ENCODE measurements at regions of chr15 and their contacts with region 1.

Region 1: GRCh38 chr15:63122002-63122893 is 587 bp downstream of the LACTB start:
- DNase-seq: peak; percentile 88 to 95
- H3K4me3 ChIP-seq: peak overlapping the region; percentile 73 to 77
- H3K27ac ChIP-seq: peak overlapping the region; percentile 76 to 89
- H3K4me1 ChIP-seq: peaks cover 0 to 4% of the 10 kb centered on the region in 2 donors
- H3K27me3 ChIP-seq: no peaks in the 10 kb centered on the region
- CTCF ChIP-seq: peak in 2 of 3 experiments; percentile 6 to 31

Region 2: DNA sequence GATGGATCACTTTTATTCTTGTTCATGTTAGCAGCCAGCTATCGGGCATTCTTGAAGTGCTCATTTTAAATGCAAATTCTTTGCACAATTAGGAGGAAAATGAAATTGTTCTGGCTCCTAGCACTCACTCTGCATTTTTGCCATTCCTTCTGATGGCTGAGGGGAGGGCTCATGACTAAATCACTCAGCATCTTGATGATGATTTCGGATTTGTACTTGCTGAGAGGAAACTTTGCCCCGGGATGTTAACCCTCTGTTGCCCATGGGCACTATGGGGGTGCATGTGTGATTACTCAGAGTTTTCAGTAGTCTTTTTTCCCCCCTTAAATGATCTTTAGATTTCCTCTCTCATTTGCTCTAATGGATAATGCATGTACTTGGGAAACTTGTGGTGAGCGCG is 657.5 kb before region 1 on chr15:
- intact Hi-C with region 1: no loop called
- DNase-seq: no peak
- H3K4me3 ChIP-seq: no peak overlapping the region
- H3K27ac ChIP-seq: peak overlapping the region; percentile 25 to 56
- H3K4me1 ChIP-seq: peaks cover 7 to 47% of the 10 kb centered on the region in 2 donors
- H3K27me3 ChIP-seq: no peaks in the 10 kb centered on the region
- CTCF ChIP-seq: no peak

Region 3: GRCh38 chr15:63198371-63199250 is 76.4 kb after region 1 on chr15:
- intact Hi-C with region 1: no loop called
- DNase-seq: no peak
- H3K4me3 ChIP-seq: no peak overlapping the region
- H3K27ac ChIP-seq: no peak overlapping the region
- H3K4me1 ChIP-seq: peaks cover 7 to 36% of the 10 kb centered on the region in 2 donors
- H3K27me3 ChIP-seq: no peaks in the 10 kb centered on the region
- CTCF ChIP-seq: no peak

Region 4: DNA sequence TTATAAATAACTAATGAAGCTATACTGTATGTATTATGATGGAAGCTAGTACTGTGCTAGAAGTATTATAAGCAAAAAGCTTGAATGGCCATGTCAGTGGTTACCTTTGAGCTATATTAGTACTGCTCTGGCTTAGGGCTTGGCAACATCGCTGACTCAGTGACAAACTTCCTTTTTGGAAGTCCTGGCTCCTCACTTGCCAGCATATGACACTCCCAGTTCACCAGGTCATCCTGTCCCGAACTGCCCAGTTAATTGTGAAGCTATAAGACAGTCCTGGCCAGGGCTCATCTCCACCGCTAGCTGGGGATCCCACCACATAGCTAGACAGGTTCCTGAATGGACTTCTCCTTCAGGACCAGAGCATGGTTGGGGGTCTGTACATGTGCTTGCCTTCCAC is 99.1 kb after region 1 on chr15:
- intact Hi-C with region 1: no loop called
- DNase-seq: no peak
- H3K4me3 ChIP-seq: no peak overlapping the region
- H3K27ac ChIP-seq: peak overlapping the region in 1 of 2 donors; percentile 7
- H3K4me1 ChIP-seq: peaks cover 12 to 15% of the 10 kb centered on the region in 2 donors
- H3K27me3 ChIP-seq: no peaks in the 10 kb centered on the region
- CTCF ChIP-seq: no peak

Region 5: DNA sequence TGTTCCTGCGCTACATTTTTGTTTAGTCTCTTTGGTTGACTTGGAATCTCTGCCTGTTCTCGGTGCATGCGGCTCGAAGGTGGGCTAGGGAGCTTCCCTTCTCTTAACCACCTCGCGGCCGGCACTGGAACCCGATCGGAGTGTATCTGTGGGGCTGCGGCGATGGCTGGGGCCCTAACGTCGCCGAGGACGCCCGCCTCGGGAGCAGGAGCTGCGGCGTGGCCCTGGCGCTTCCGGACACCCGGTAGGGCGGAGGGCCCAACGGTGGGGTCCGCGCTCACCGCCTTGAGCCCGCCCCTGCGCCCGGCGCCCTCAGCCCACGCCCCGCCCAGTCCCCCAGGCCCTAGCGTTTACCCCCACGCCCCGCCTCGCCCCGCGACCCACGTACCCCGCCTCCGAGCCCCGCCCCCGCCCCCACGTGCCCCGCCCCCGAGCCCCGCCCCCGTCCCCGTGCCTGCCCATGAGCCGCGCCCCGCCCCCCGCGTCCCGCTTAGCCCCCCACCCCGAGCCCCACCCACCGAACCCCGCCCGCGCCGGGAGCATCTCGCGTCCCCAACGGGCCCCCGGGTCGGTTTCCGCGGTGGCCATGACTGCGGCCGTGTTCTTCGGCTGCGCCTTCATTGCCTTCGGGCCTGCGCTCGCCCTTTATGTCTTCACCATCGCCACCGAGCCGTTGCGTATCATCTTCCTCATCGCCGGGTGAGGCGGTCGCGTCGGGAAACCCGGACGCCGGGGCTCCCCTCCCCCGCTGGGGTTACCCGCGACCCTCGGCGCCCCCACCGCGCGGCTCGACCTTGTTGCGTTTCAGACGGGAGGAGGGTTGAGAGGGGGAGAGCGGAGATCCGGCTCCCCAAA is 155.0 kb after region 1 on chr15 and contains the start of gene APH1B:
- intact Hi-C with region 1: loop called (anchors 5 kb)
- DNase-seq: peak in 1 of 2 donors; percentile 85
- H3K4me3 ChIP-seq: peak within 1 kb of the TSS; percentile 76 to 81
- H3K27ac ChIP-seq: peak within 1 kb of the TSS; percentile 84 to 87
- H3K4me1 ChIP-seq: peaks cover 0 to 4% of the 10 kb centered on the region in 2 donors
- H3K27me3 ChIP-seq: no peaks in the 10 kb centered on the region
- CTCF ChIP-seq: no peak
- total RNA-seq, gene APH1B: 17.0 TPM